ENCODE measurements at regions of chr2 and their contacts with region 1.

Region 1: GRCh38 chr2:98465456-98466226 is 21.0 kb downstream of the INPP4A start:
- DNase-seq: peak; percentile 83
- H3K4me3 Mint-ChIP-seq: peak overlapping the region; percentile 66
- H3K27ac Mint-ChIP-seq: peak overlapping the region; percentile 95
- H3K4me1 Mint-ChIP-seq: peaks cover 88% of the 10 kb centered on the region
- H3K27me3 Mint-ChIP-seq: no peaks in the 10 kb centered on the region

Region 2: GRCh38 chr2:98334439-98335078 is 131.1 kb before region 1 on chr2:
- CTCF ChIA-PET with region 1: no interaction called
- intact Hi-C with region 1: no loop called
- DNase-seq: no peak
- H3K4me3 Mint-ChIP-seq: no peak overlapping the region
- H3K27ac Mint-ChIP-seq: no peak overlapping the region
- H3K4me1 Mint-ChIP-seq: no peaks in the 10 kb centered on the region
- H3K27me3 Mint-ChIP-seq: peaks cover 6% of the 10 kb centered on the region

Region 3: GRCh38 chr2:98412751-98413458 is 52.7 kb before region 1 on chr2:
- CTCF ChIA-PET with region 1: interaction called, 5 read pairs
- intact Hi-C with region 1: loop called (anchors 1 kb)
- DNase-seq: peak; percentile 70
- H3K4me3 Mint-ChIP-seq: no peak overlapping the region
- H3K27ac Mint-ChIP-seq: no peak overlapping the region
- H3K4me1 Mint-ChIP-seq: peaks cover 17% of the 10 kb centered on the region
- H3K27me3 Mint-ChIP-seq: no peaks in the 10 kb centered on the region

Region 4: GRCh38 chr2:98444436-98445176 is 21.0 kb before region 1 on chr2 and contains the start of gene INPP4A:
- CTCF ChIA-PET with region 1: interaction called, 21 read pairs
- intact Hi-C with region 1: loop called (anchors 2 kb)
- DNase-seq: peak; percentile 69
- H3K4me3 Mint-ChIP-seq: peak within 1 kb of the TSS; percentile 87
- H3K27ac Mint-ChIP-seq: peak within 1 kb of the TSS; percentile 88
- H3K4me1 Mint-ChIP-seq: peaks cover 38% of the 10 kb centered on the region
- H3K27me3 Mint-ChIP-seq: no peaks in the 10 kb centered on the region
- total RNA-seq, gene INPP4A: 33.1 to 34.8 TPM

Region 5: GRCh38 chr2:98479959-98480524 is 14.4 kb after region 1 on chr2:
- CTCF ChIA-PET with region 1: interaction called, 22 read pairs
- intact Hi-C with region 1: loop called (anchors 1 kb)
- DNase-seq: peak; percentile 70
- H3K4me3 Mint-ChIP-seq: peak overlapping the region; percentile 31
- H3K27ac Mint-ChIP-seq: peak overlapping the region; percentile 66
- H3K4me1 Mint-ChIP-seq: peaks cover 98% of the 10 kb centered on the region
- H3K27me3 Mint-ChIP-seq: no peaks in the 10 kb centered on the region

Measured in activated naive CD4-positive, alpha-beta T cell treated with anti-CD3 and anti-CD28 coated beads for 36 hours (primary cell).